T-cell (primary cell): ENCODE measurements at regions of chr12 and their contacts with region 1.

Region 1: GRCh38 chr12:71746983-71747611 is 7.6 kb upstream of the RAB21 start:
- DNase-seq: peak in 34 of 35 experiments; percentile 8 to 77 (median 32)
- ATAC-seq: peak; percentile 80 to 91 (median 84)
- H3K4me3 ChIP-seq: no peak overlapping the region
- H3K4me3 Mint-ChIP-seq: no peak overlapping the region
- H3K27ac ChIP-seq: no peak overlapping the region
- H3K27ac Mint-ChIP-seq: no peak overlapping the region
- H3K4me1 ChIP-seq: no peaks in the 10 kb centered on the region
- H3K4me1 Mint-ChIP-seq: no peaks in the 10 kb centered on the region
- H3K27me3 ChIP-seq: peaks cover 2 to 9% of the 10 kb centered on the region in 2 experiments
- H3K27me3 Mint-ChIP-seq: peaks cover 4 to 12% of the 10 kb centered on the region in 2 donors

Region 2: DNA sequence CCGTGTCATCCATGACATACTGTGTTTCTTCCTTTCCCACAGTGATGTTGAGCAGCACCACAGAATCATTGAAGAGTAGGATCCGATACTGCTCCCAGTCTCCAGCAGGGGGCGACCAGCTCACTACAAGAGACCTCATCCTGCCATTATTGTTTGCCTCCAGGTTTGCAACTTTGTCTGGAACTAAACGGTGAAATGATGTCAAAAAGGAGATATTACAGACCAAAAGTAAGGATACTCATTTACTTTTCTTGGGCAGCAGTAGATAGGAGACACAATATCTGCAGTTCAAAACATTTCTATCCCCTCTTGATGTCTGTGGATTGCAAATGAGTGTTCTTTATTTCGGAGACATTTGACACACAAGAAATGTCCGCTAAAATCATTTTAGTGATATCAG is 1157.0 kb before region 1 on chr12:
- CTCF ChIA-PET with region 1: interaction called, 3 to 11 read pairs
- POLR2A ChIA-PET with region 1: no interaction called
- DNase-seq: peak in 30 of 35 experiments; percentile 3 to 55 (median 29)
- ATAC-seq: peak in 3 of 4 experiments; percentile 38 to 73 (median 45)
- H3K4me3 ChIP-seq: no peak overlapping the region
- H3K4me3 Mint-ChIP-seq: no peak overlapping the region
- H3K27ac ChIP-seq: no peak overlapping the region
- H3K27ac Mint-ChIP-seq: no peak overlapping the region
- H3K4me1 ChIP-seq: no peaks in the 10 kb centered on the region
- H3K4me1 Mint-ChIP-seq: no peaks in the 10 kb centered on the region
- H3K27me3 ChIP-seq: no peaks in the 10 kb centered on the region
- H3K27me3 Mint-ChIP-seq: peaks cover 22 to 26% of the 10 kb centered on the region in 2 donors

Region 3: DNA sequence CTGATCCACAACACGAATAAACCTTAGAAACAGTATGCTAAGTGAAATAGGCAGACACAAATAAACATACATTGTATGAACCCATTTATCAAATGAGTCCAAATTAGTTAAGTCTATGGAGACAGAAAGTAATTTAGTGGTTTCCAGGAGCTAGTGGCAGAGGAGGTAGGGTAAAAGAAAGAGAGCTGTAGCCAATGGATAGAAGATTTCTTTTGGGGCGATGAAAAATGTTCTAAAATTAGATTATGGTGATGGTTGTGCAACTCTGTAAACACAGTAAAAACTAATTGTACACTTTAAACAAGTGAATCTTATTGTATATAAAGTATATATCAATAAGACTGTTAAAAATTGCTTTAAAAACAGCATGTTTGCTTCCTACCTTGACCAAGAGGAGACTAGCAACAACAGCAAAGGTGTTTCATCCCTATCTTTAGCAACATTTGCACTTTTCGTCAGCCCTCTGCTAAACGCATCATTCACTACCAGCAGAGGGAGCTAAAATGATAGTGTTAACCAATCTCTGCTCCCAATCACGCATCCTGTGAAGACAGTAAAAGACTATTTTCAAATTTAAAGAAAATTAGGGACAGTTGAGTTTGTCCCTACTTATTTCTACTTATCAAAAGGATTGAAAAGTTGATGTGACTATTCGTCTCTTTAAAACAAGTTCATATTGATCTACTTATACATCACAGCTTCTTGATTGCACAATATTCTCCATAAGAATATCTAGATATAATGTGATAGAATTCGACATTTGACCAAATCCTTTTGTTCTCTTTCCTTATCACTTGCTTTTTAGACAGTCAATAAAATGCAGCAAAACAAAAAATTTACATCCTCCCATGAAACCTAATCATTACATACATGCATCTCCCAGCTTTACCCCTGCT is 331.5 kb before region 1 on chr12:
- CTCF ChIA-PET with region 1: interaction called, 25 to 79 read pairs
- POLR2A ChIA-PET with region 1: interaction called in 1 of 2 experiments, 5 read pairs
- DNase-seq: peak in 5 of 35 experiments; percentile 10 to 70 (median 15)
- ATAC-seq: peak; percentile 52 to 70 (median 60)
- H3K4me3 ChIP-seq: no peak overlapping the region
- H3K4me3 Mint-ChIP-seq: no peak overlapping the region
- H3K27ac ChIP-seq: no peak overlapping the region
- H3K27ac Mint-ChIP-seq: no peak overlapping the region
- H3K4me1 ChIP-seq: no peaks in the 10 kb centered on the region
- H3K4me1 Mint-ChIP-seq: no peaks in the 10 kb centered on the region
- H3K27me3 ChIP-seq: no peaks in the 10 kb centered on the region
- H3K27me3 Mint-ChIP-seq: peaks cover 4 to 6% of the 10 kb centered on the region in 2 donors

Region 4: GRCh38 chr12:71645268-71645667 is 101.8 kb before region 1 on chr12:
- CTCF ChIA-PET with region 1: interaction called, 5 to 13 read pairs
- POLR2A ChIA-PET with region 1: no interaction called
- DNase-seq: no peak
- ATAC-seq: no peak
- H3K4me3 ChIP-seq: no peak overlapping the region
- H3K4me3 Mint-ChIP-seq: no peak overlapping the region
- H3K27ac ChIP-seq: no peak overlapping the region
- H3K27ac Mint-ChIP-seq: peak overlapping the region; percentile 74 to 78
- H3K4me1 ChIP-seq: no peaks in the 10 kb centered on the region
- H3K4me1 Mint-ChIP-seq: peaks cover 44 to 54% (median 47%) of the 10 kb centered on the region in 3 donors
- H3K27me3 ChIP-seq: no peaks in the 10 kb centered on the region
- H3K27me3 Mint-ChIP-seq: no peaks in the 10 kb centered on the region

Region 5: GRCh38 chr12:71685914-71686665 is 61.0 kb before region 1 on chr12 and contains the start of gene TMEM19:
- CTCF ChIA-PET with region 1: interaction called, 4 to 25 read pairs
- POLR2A ChIA-PET with region 1: no interaction called
- DNase-seq: peak; percentile 71 to 88 (median 80)
- ATAC-seq: peak; percentile 92 to 93 (median 93)
- H3K4me3 ChIP-seq: peak within 1 kb of the TSS; percentile 57 to 79
- H3K4me3 Mint-ChIP-seq: peak within 1 kb of the TSS; percentile 85 to 96 (median 92)
- H3K27ac ChIP-seq: peak within 1 kb of the TSS; percentile 62
- H3K27ac Mint-ChIP-seq: peak within 1 kb of the TSS; percentile 87 to 90
- H3K4me1 ChIP-seq: peaks cover 5 to 16% of the 10 kb centered on the region in 2 experiments
- H3K4me1 Mint-ChIP-seq: peaks cover 24 to 48% (median 35%) of the 10 kb centered on the region in 3 donors
- H3K27me3 ChIP-seq: no peaks in the 10 kb centered on the region
- H3K27me3 Mint-ChIP-seq: no peaks in the 10 kb centered on the region
- total RNA-seq, gene TMEM19: 14.1 to 21.5 (median 17.7) TPM

Region 6: GRCh38 chr12:71780237-71780822 is 33.2 kb after region 1 on chr12:
- CTCF ChIA-PET with region 1: interaction called, 4 to 13 read pairs
- POLR2A ChIA-PET with region 1: interaction called in 1 of 2 experiments, 5 read pairs
- DNase-seq: peak in 32 of 35 experiments; percentile 2 to 68 (median 41)
- ATAC-seq: peak in 2 of 4 experiments; percentile 43 to 58
- H3K4me3 ChIP-seq: no peak overlapping the region
- H3K4me3 Mint-ChIP-seq: no peak overlapping the region
- H3K27ac ChIP-seq: no peak overlapping the region
- H3K27ac Mint-ChIP-seq: peak overlapping the region in 1 of 2 donors; percentile 77
- H3K4me1 ChIP-seq: no peaks in the 10 kb centered on the region
- H3K4me1 Mint-ChIP-seq: peaks cover 9 to 18% (median 10%) of the 10 kb centered on the region in 3 donors
- H3K27me3 ChIP-seq: no peaks in the 10 kb centered on the region
- H3K27me3 Mint-ChIP-seq: no peaks in the 10 kb centered on the region